PC-3 (cell line): ENCODE measurements at regions of chr14 and their contacts with region 1.

Region 1: GRCh38 chr14:83419420-83419819 is 1885.8 kb upstream of the SEL1L start:
- DNase-seq: no peak
- ATAC-seq: no peak
- H3K4me3 ChIP-seq: no peak overlapping the region
- H3K27ac ChIP-seq: no peak overlapping the region
- H3K4me1 ChIP-seq: no peaks in the 10 kb centered on the region
- H3K27me3 ChIP-seq: no peaks in the 10 kb centered on the region
- CTCF ChIP-seq: no peak

Region 2: GRCh38 chr14:83025989-83026388 is 393.4 kb before region 1 on chr14:
- CTCF ChIA-PET with region 1: no interaction called
- POLR2A ChIA-PET with region 1: no interaction called
- intact Hi-C with region 1: loop called (anchors 5 kb)
- DNase-seq: no peak
- ATAC-seq: no peak
- H3K4me3 ChIP-seq: no peak overlapping the region
- H3K27ac ChIP-seq: no peak overlapping the region
- H3K4me1 ChIP-seq: no peaks in the 10 kb centered on the region
- H3K27me3 ChIP-seq: no peaks in the 10 kb centered on the region
- CTCF ChIP-seq: no peak